Naive thymus-derived CD4-positive, alpha-beta T cell (primary cell): ENCODE measurements at regions of chr9 and their contacts with region 1.

Region 1: DNA sequence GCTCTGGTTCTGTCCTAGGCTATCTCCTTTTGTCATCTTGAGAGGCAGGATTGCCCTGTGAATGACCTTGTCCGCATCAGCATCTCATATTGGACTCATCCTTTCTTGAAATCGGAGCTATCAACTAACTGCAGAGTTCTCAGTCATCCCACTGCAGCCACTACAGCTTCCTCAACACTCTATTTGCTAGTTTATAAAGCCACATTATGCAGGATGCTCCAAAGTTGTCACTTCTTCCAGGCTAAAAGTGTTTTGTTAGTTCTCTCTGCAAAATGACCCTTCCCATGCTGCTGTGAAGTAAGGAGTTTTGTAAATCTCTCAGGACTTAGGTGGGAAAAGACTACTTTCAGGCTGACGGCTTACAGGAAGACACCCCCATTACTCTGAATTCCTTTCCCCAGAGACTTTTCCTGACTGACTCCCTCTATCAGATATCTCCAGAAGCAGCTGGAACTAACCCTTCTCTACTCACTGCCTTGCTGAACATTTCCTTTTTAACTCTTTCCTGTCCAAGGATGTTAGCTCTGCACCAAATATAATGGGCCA is 257.6 kb downstream of the NFIB start:
- DNase-seq: no peak
- ATAC-seq: no peak
- H3K4me3 ChIP-seq: no peak overlapping the region
- H3K4me3 Mint-ChIP-seq: no peak overlapping the region
- H3K27ac ChIP-seq: no peak overlapping the region
- H3K27ac Mint-ChIP-seq: no peak overlapping the region
- H3K4me1 ChIP-seq: no peaks in the 10 kb centered on the region
- H3K4me1 Mint-ChIP-seq: no peaks in the 10 kb centered on the region
- H3K27me3 ChIP-seq: no peaks in the 10 kb centered on the region
- H3K27me3 Mint-ChIP-seq: no peaks in the 10 kb centered on the region

Region 2: DNA sequence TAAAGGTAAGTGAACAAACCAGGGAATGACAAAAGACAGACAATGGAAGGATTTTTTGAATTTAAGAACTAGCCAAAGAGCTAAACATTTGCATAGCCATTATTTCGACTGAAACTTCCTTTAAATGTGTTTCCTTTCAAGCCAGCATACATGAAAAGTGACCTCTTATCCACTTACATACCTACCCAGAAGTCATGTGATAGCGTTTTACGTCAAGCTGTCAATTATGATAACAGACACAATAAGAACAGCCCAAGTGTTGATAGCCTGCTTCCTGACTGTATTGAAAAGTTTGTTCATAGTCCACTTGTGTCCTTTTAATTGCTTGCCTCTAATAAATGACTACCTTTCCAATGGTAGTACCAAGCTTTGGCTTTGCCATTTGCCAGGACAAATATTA is 51.6 kb after region 1 on chr9:
- CTCF ChIA-PET with region 1: interaction called, 3 read pairs
- POLR2A ChIA-PET with region 1: no interaction called
- intact Hi-C with region 1: loop called in 1 of 2 experiments (anchors 10 kb)
- DNase-seq: no peak
- ATAC-seq: no peak
- H3K4me3 ChIP-seq: no peak overlapping the region
- H3K4me3 Mint-ChIP-seq: no peak overlapping the region
- H3K27ac ChIP-seq: no peak overlapping the region
- H3K27ac Mint-ChIP-seq: no peak overlapping the region
- H3K4me1 ChIP-seq: no peaks in the 10 kb centered on the region
- H3K4me1 Mint-ChIP-seq: no peaks in the 10 kb centered on the region
- H3K27me3 ChIP-seq: no peaks in the 10 kb centered on the region
- H3K27me3 Mint-ChIP-seq: no peaks in the 10 kb centered on the region